ENCODE measurements at regions of chr14 and their contacts with region 1.

Region 1: GRCh38 chr14:22986508-22987054 is 4.2 kb upstream of the AJUBA start:
- DNase-seq: peak; percentile 92
- H3K4me3 Mint-ChIP-seq: no peak overlapping the region
- H3K27ac Mint-ChIP-seq: no peak overlapping the region
- H3K4me1 Mint-ChIP-seq: no peaks in the 10 kb centered on the region
- H3K27me3 Mint-ChIP-seq: no peaks in the 10 kb centered on the region

Region 2: DNA sequence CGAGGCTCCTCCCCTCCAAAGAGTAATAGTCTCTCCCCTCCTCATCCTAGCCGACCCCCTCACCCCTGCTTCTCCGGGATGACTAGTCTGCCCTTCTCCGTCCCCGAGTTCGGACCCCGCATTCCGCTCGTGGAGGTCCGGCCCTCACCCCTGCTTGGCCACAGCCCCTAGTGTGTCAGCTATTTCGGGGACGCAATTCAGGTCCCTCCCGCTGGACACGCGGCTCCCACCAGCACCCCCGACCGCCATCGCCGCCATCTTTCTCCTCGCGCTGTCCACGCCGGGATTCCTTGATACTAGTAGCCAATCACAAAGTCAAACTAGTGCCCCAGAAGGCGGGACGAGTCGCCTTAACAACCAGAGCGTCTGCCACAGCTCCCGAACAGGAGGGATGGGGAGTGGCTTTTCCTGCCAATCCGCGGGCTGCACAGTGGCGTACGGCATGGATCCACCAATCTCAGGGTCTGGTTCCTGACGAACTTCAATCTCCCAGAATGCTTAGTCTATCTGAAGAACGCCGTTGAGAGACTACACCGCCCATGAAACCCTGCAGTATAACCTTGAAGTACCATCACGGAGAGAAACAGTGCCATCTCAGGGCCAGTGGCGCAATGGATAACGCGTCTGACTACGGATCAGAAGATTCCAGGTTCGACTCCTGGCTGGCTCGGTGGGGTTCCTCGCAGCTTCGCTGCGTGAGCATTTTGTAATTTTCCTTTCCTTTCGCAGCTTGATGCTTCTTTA is 57.3 kb before region 1 on chr14 and contains the start of gene PRMT5:
- CTCF ChIA-PET with region 1: interaction called, 35 read pairs
- POLR2A ChIA-PET with region 1: interaction called, 3 read pairs
- intact Hi-C with region 1: loop called (anchors 1 kb)
- DNase-seq: peak; percentile 98
- H3K4me3 Mint-ChIP-seq: no peak within 1 kb of the TSS
- H3K27ac Mint-ChIP-seq: no peak within 1 kb of the TSS
- H3K4me1 Mint-ChIP-seq: peaks cover 37% of the 10 kb centered on the region
- H3K27me3 Mint-ChIP-seq: no peaks in the 10 kb centered on the region
- total RNA-seq, gene PRMT5: 85.6 to 100 TPM

Region 3: GRCh38 chr14:22973217-22974032 is 13.2 kb before region 1 on chr14:
- CTCF ChIA-PET with region 1: interaction called, 201 read pairs
- POLR2A ChIA-PET with region 1: no interaction called
- intact Hi-C with region 1: loop called (anchors 1 kb)
- DNase-seq: peak; percentile 55
- H3K4me3 Mint-ChIP-seq: no peak overlapping the region
- H3K27ac Mint-ChIP-seq: no peak overlapping the region
- H3K4me1 Mint-ChIP-seq: no peaks in the 10 kb centered on the region
- H3K27me3 Mint-ChIP-seq: no peaks in the 10 kb centered on the region

Region 4: DNA sequence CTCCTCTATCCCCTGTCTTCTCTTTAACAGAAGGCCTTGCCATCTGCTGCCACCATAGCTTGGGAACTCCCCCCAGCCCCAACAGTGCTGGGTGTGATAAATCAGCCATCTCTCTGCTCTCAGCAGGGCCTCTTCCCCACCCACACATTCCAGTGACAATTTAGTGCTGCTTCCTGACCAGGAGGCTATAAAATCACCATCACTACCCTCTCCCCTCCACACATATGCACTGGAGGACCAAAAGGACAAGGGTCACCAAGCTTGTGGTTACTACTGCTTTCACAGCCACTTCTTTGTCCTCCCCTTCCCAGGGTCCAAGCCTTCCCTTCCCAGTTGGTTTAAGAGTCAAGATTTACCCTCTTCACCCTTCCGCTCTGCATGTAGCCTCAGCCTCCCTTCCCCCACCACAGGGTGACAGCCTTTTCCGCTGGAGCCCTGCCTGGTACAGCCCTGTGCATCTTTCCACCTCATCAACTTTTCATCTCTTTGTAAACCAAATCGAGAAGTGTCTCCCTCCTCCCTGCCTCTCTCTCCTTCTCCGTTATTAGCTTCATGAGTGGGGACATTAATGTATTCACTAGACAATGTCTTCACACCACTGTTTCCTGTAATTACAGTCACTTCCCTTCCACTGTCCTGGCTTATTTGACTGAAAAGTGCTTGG is 38.7 kb after region 1 on chr14:
- CTCF ChIA-PET with region 1: interaction called, 15 read pairs
- POLR2A ChIA-PET with region 1: interaction called, 3 read pairs
- intact Hi-C with region 1: no loop called
- DNase-seq: peak; percentile 53
- H3K4me3 Mint-ChIP-seq: peak overlapping the region; percentile 9
- H3K27ac Mint-ChIP-seq: peak overlapping the region; percentile 81
- H3K4me1 Mint-ChIP-seq: peaks cover 47% of the 10 kb centered on the region
- H3K27me3 Mint-ChIP-seq: no peaks in the 10 kb centered on the region

Region 5: GRCh38 chr14:23057757-23058653 is 71.4 kb after region 1 on chr14:
- CTCF ChIA-PET with region 1: interaction called, 839 read pairs
- POLR2A ChIA-PET with region 1: interaction called, 14 read pairs
- intact Hi-C with region 1: loop called (anchors 1 kb)
- DNase-seq: peak; percentile 92
- H3K4me3 Mint-ChIP-seq: peak overlapping the region; percentile 78
- H3K27ac Mint-ChIP-seq: no peak overlapping the region
- H3K4me1 Mint-ChIP-seq: peaks cover 16% of the 10 kb centered on the region
- H3K27me3 Mint-ChIP-seq: peaks cover 2% of the 10 kb centered on the region

Region 6: GRCh38 chr14:23120541-23121251 is 134.1 kb after region 1 on chr14:
- CTCF ChIA-PET with region 1: interaction called, 11 read pairs
- POLR2A ChIA-PET with region 1: no interaction called
- intact Hi-C with region 1: no loop called
- DNase-seq: peak; percentile 90
- H3K4me3 Mint-ChIP-seq: peak overlapping the region; percentile 9
- H3K27ac Mint-ChIP-seq: peak overlapping the region; percentile 58
- H3K4me1 Mint-ChIP-seq: peaks cover 32% of the 10 kb centered on the region
- H3K27me3 Mint-ChIP-seq: no peaks in the 10 kb centered on the region